Activated CD8-positive, alpha-beta memory T cell treated with anti-CD3 and anti-CD28 coated beads, Interleukin-2, amount 10 ng/mL, durations not matched to agents 7 days and 5 days (primary cell): ENCODE measurements at regions of chr6 and their contacts with region 1.

Region 1: GRCh38 chr6:83067448-83068413 is at the start of gene DOP1A:
- DNase-seq: peak; percentile 97
- ATAC-seq: peak; percentile 88
- H3K4me3 Mint-ChIP-seq: peak within 1 kb of the TSS; percentile 82
- H3K27ac Mint-ChIP-seq: peak within 1 kb of the TSS; percentile 85
- H3K4me1 Mint-ChIP-seq: peaks cover 44% of the 10 kb centered on the region
- H3K27me3 Mint-ChIP-seq: no peaks in the 10 kb centered on the region
- total RNA-seq, gene DOP1A: 22.0 to 34.7 TPM

Region 2: GRCh38 chr6:82270881-82271645 is 796.7 kb before region 1 on chr6:
- CTCF ChIA-PET with region 1: interaction called, 33 read pairs
- DNase-seq: no peak
- ATAC-seq: peak; percentile 39
- H3K4me3 Mint-ChIP-seq: no peak overlapping the region
- H3K27ac Mint-ChIP-seq: no peak overlapping the region
- H3K4me1 Mint-ChIP-seq: peaks cover 2% of the 10 kb centered on the region
- H3K27me3 Mint-ChIP-seq: peaks cover 2% of the 10 kb centered on the region

Region 3: GRCh38 chr6:83092756-83093399 is 25.1 kb after region 1 on chr6:
- CTCF ChIA-PET with region 1: interaction called, 97 read pairs
- DNase-seq: no peak
- ATAC-seq: no peak
- H3K4me3 Mint-ChIP-seq: no peak overlapping the region
- H3K27ac Mint-ChIP-seq: no peak overlapping the region
- H3K4me1 Mint-ChIP-seq: peaks cover 39% of the 10 kb centered on the region
- H3K27me3 Mint-ChIP-seq: no peaks in the 10 kb centered on the region

Region 4: GRCh38 chr6:83138118-83138722 is 70.5 kb after region 1 on chr6:
- CTCF ChIA-PET with region 1: interaction called, 11 read pairs
- DNase-seq: no peak
- ATAC-seq: no peak
- H3K4me3 Mint-ChIP-seq: no peak overlapping the region
- H3K27ac Mint-ChIP-seq: no peak overlapping the region
- H3K4me1 Mint-ChIP-seq: no peaks in the 10 kb centered on the region
- H3K27me3 Mint-ChIP-seq: no peaks in the 10 kb centered on the region

Region 5: DNA sequence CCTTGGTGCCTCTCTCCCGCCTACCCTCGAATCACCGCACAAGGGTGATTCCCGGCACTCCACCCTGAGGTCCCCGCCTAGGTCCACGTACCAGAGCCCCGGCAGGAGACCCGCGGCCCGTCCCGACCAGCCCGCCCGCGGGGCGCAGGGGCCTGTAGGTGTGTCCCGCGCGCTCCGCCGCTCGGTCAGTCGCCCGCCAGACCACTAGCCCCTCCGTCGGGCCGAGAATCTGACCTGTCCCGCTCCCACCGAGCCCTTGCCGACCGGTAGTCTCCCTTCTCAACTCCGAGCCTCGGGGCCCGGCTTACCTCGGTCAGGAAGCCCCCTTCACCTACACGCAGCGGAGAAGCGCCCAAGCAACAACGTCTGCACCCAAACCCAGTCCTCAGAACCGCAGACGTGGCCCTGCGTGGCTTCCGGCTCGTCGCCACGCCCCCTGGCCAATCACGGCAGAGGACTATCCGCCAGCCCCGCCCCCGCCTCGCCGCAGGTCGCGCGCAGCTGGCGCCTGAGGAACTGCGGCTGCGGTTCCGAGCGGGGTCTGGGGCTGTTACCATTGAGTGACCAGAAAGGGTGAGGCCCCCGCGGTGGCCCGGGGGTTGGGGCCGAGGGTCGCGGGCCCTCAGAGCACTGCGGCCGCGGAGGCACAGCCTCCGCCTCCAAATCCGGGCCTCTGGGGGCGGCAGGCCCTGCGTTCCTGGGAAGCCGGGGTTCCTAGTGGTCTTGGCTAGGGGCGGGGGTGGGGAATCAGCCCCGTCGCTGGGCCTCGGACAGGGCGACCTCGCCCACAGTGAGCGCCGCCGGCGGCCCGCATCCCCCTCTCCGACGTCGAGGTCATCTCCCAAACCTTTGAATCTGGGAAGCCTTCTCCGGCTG is 125.4 kb after region 1 on chr6 and contains the starts of genes PGM3 and RWDD2A:
- CTCF ChIA-PET with region 1: interaction called, 44 read pairs
- DNase-seq: peak; percentile 92
- ATAC-seq: peak; percentile 97
- H3K4me3 Mint-ChIP-seq: peak within 1 kb of the TSS; percentile 98
- H3K27ac Mint-ChIP-seq: peak within 1 kb of the TSS; percentile 93
- H3K4me1 Mint-ChIP-seq: peaks cover 26% of the 10 kb centered on the region
- H3K27me3 Mint-ChIP-seq: peaks cover 9% of the 10 kb centered on the region
- total RNA-seq, gene PGM3: 11.5 to 14.7 TPM
- total RNA-seq, gene RWDD2A: 0.91 to 1.3 TPM

Region 6: GRCh38 chr6:83215131-83216047 is 147.7 kb after region 1 on chr6:
- CTCF ChIA-PET with region 1: interaction called, 199 read pairs
- DNase-seq: peak; percentile 78
- ATAC-seq: peak; percentile 99
- H3K4me3 Mint-ChIP-seq: no peak overlapping the region
- H3K27ac Mint-ChIP-seq: no peak overlapping the region
- H3K4me1 Mint-ChIP-seq: peaks cover 5% of the 10 kb centered on the region
- H3K27me3 Mint-ChIP-seq: peaks cover 29% of the 10 kb centered on the region

Region 7: GRCh38 chr6:83804886-83805285 is 737.2 kb after region 1 on chr6:
- CTCF ChIA-PET with region 1: no interaction called
- DNase-seq: no peak
- ATAC-seq: no peak
- H3K4me3 Mint-ChIP-seq: no peak overlapping the region
- H3K27ac Mint-ChIP-seq: no peak overlapping the region
- H3K4me1 Mint-ChIP-seq: no peaks in the 10 kb centered on the region
- H3K27me3 Mint-ChIP-seq: no peaks in the 10 kb centered on the region